CD4-positive, alpha-beta T cell (primary cell): ENCODE measurements at regions of chr20 and their contacts with region 1.

Region 1: GRCh38 chr20:18137412-18138265 is at the starts of genes KAT14 and PET117:
- DNase-seq: peak; percentile 83 to 96 (median 91)
- ATAC-seq: peak; percentile 92
- H3K4me3 ChIP-seq: peak within 1 kb of the TSS; percentile 81
- H3K4me3 Mint-ChIP-seq: peak within 1 kb of the TSS; percentile 96
- H3K27ac ChIP-seq: peak within 1 kb of the TSS; percentile 72 to 75
- H3K27ac Mint-ChIP-seq: peak within 1 kb of the TSS; percentile 95
- H3K4me1 ChIP-seq: peaks cover 32% of the 10 kb centered on the region
- H3K4me1 Mint-ChIP-seq: peaks cover 32% of the 10 kb centered on the region
- H3K27me3 ChIP-seq: no peaks in the 10 kb centered on the region
- H3K27me3 Mint-ChIP-seq: no peaks in the 10 kb centered on the region
- CTCF ChIP-seq: no peak
- total RNA-seq, gene KAT14: 8.5 to 9.4 TPM
- total RNA-seq, gene PET117: 13.6 to 14.6 TPM

Region 2: DNA sequence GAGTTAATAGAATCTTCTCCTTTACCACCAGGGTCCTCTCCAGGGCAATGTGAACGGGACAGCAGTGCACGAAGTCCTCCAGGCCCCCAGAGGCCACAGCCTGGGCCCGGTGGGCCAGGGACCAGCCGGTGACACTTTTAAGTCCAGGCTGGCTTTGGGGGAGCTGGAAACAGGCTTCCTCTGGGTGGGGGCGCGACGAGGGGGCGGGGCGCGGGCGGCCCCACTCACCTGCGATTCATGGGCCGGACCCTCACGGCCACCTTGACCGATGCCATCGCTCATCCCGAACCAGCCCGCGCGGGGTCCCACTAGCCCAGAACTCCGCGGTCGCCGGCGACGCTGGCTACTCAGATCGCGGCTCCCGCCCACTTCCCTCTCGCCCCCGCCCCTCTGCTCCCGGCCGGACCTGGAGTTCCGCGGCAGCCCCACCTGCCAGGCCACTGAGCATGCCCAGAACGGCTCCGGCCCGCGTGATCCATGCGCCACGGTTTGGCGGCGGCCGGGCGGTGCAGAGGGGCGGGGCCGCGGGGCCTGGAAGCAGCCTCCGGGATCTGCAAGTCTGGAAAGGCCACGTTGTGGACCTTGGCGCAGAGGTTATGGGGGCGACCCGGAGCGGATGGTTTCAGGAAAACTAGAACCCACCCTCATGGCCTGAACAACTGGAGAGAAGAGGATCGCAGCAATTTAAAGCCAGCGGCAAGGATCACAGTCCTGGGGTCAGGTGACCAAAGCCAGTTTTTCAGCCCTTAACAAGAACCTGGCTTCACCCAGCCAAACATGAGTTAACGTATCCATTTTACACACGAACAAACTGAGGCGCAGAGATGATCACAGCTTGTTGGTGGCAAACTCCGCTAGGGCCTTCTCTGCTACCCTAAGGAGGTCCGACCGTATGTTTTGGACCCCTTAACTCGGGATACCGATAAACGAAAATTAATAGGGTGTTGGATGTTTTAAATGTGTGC is 1564.4 kb before region 1 on chr20 and contains the start of gene KIF16B:
- CTCF ChIA-PET with region 1: no interaction called
- POLR2A ChIA-PET with region 1: no interaction called
- intact Hi-C with region 1: loop called in 1 of 2 experiments (anchors 10 kb)
- DNase-seq: peak; percentile 58 to 89 (median 76)
- ATAC-seq: peak; percentile 81
- H3K4me3 ChIP-seq: peak within 1 kb of the TSS; percentile 78
- H3K4me3 Mint-ChIP-seq: peak within 1 kb of the TSS; percentile 92
- H3K27ac ChIP-seq: no peak within 1 kb of the TSS
- H3K27ac Mint-ChIP-seq: peak within 1 kb of the TSS; percentile 64
- H3K4me1 ChIP-seq: peaks cover 34% of the 10 kb centered on the region
- H3K4me1 Mint-ChIP-seq: peaks cover 49% of the 10 kb centered on the region
- H3K27me3 ChIP-seq: no peaks in the 10 kb centered on the region
- H3K27me3 Mint-ChIP-seq: no peaks in the 10 kb centered on the region
- CTCF ChIP-seq: no peak
- total RNA-seq, gene KIF16B: 10.2 to 11.5 TPM

Region 3: GRCh38 chr20:16729565-16730456 is 1407.8 kb before region 1 on chr20 and contains the start of gene SNRPB2:
- CTCF ChIA-PET with region 1: no interaction called
- POLR2A ChIA-PET with region 1: no interaction called
- intact Hi-C with region 1: loop called in 1 of 2 experiments (anchors 2 kb)
- DNase-seq: peak; percentile 85 to 96 (median 88)
- ATAC-seq: peak; percentile 96
- H3K4me3 ChIP-seq: peak within 1 kb of the TSS; percentile 93
- H3K4me3 Mint-ChIP-seq: peak within 1 kb of the TSS; percentile 99
- H3K27ac ChIP-seq: peak within 1 kb of the TSS; percentile 81 to 92
- H3K27ac Mint-ChIP-seq: peak within 1 kb of the TSS; percentile 96
- H3K4me1 ChIP-seq: peaks cover 29% of the 10 kb centered on the region
- H3K4me1 Mint-ChIP-seq: peaks cover 57% of the 10 kb centered on the region
- H3K27me3 ChIP-seq: peaks cover 6 to 16% of the 10 kb centered on the region in 2 experiments
- H3K27me3 Mint-ChIP-seq: peaks cover 26% of the 10 kb centered on the region
- CTCF ChIP-seq: no peak
- total RNA-seq, gene SNRPB2: 49.6 to 50.4 TPM

Region 4: GRCh38 chr20:17569616-17570346 is 567.9 kb before region 1 on chr20 and contains the start of gene DSTN:
- CTCF ChIA-PET with region 1: no interaction called
- POLR2A ChIA-PET with region 1: no interaction called
- intact Hi-C with region 1: loop called in 1 of 2 experiments (anchors 5 kb)
- DNase-seq: peak; percentile 75 to 95 (median 82)
- ATAC-seq: peak; percentile 87
- H3K4me3 ChIP-seq: peak within 1 kb of the TSS; percentile 85
- H3K4me3 Mint-ChIP-seq: peak within 1 kb of the TSS; percentile 96
- H3K27ac ChIP-seq: peak within 1 kb of the TSS; percentile 53 to 55
- H3K27ac Mint-ChIP-seq: peak within 1 kb of the TSS; percentile 72
- H3K4me1 ChIP-seq: peaks cover 17% of the 10 kb centered on the region
- H3K4me1 Mint-ChIP-seq: peaks cover 34% of the 10 kb centered on the region
- H3K27me3 ChIP-seq: no peaks in the 10 kb centered on the region
- H3K27me3 Mint-ChIP-seq: no peaks in the 10 kb centered on the region
- CTCF ChIP-seq: no peak
- total RNA-seq, gene DSTN: 36.0 to 38.9 TPM

Region 5: GRCh38 chr20:18197382-18198131 is 59.9 kb after region 1 on chr20:
- CTCF ChIA-PET with region 1: no interaction called
- POLR2A ChIA-PET with region 1: no interaction called
- intact Hi-C with region 1: no loop called
- DNase-seq: no peak
- ATAC-seq: no peak
- H3K4me3 ChIP-seq: no peak overlapping the region
- H3K4me3 Mint-ChIP-seq: no peak overlapping the region
- H3K27ac ChIP-seq: no peak overlapping the region
- H3K27ac Mint-ChIP-seq: no peak overlapping the region
- H3K4me1 ChIP-seq: no peaks in the 10 kb centered on the region
- H3K4me1 Mint-ChIP-seq: no peaks in the 10 kb centered on the region
- H3K27me3 ChIP-seq: no peaks in the 10 kb centered on the region
- H3K27me3 Mint-ChIP-seq: no peaks in the 10 kb centered on the region
- CTCF ChIP-seq: no peak